Gastrocnemius medialis (tissue), 4 donors: ENCODE measurements at regions of chr5 and their contacts with region 1.

Region 1: DNA sequence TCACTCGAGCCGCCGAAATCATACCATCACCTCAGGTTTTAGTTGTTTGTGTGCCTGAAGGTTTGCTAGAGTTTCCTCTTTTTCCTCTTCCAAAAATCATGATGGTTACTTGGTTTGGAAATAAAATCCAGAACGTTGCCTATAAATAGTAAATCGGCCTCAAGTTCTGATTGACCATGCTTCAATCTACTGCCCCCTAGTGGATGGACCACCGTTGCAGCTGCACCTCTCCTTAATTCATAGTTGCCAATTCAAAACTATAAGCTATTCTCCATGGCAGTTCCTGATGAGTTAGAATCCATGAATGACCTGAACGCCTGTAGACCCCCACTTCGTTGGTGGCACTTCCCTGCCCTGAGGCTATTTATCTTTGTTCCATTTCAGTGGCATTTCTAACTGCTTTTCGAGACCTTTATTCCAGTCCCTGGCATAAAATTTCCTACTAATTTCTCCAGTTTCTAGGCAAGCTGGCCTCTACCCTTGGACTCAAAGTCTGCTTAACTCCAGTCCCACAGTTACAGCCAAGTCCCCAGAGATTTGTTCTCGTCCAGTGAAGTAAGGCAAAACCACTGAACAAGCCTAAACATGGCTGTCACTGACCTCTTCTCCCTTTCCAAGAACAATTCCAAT is 422.6 kb downstream of the EFNA5 start:
- DNase-seq: peak; percentile 15 to 64
- ATAC-seq: peak; percentile 65 to 89
- H3K4me3 ChIP-seq: peak overlapping the region in 1 of 4 donors; percentile 8
- H3K27ac ChIP-seq: peak overlapping the region in 1 of 4 donors; percentile 16
- H3K4me1 ChIP-seq: no peaks in the 10 kb centered on the region
- H3K27me3 ChIP-seq: no peaks in the 10 kb centered on the region
- CTCF ChIP-seq: peak; percentile 60 to 87 (median 77)
- POLR2A ChIP-seq: no peak

Region 2: DNA sequence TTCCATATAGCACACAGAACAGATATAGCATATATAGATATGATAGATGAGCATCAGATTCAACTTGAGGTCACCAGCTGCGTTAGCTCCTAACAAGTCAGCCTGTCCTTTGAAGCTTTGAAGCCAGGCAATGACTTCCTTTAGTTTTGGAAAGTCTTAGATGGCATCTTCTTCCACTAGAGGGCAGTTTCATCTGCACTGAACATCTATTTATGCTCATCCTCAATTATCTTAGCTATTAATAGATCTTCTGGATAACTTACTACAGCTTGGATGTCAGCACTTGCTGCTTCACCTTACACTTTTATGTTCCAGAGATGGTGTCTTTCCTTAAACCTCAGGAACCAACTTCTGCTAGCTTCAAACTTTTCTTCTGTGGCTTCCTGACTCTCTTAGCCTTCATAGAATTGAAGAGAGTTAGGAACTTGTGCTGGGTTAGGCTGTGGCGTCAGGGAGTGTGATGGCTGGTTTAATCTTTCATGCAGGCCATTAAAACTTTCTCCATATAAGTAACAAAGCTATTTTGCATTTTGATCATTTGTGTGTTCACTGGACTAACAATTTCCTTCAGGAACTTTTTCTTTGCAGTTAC is 978.8 kb before region 1 on chr5:
- in situ Hi-C with region 1: no loop called
- intact Hi-C with region 1: loop called (anchors 5 kb)
- DNase-seq: no peak
- ATAC-seq: peak in 1 of 2 donors; percentile 71
- H3K4me3 ChIP-seq: no peak overlapping the region
- H3K27ac ChIP-seq: no peak overlapping the region
- H3K4me1 ChIP-seq: peaks cover 0 to 4% of the 10 kb centered on the region in 2 donors
- H3K27me3 ChIP-seq: no peaks in the 10 kb centered on the region
- CTCF ChIP-seq: peak in 2 of 5 experiments; percentile 30 to 38
- POLR2A ChIP-seq: no peak

Region 3: DNA sequence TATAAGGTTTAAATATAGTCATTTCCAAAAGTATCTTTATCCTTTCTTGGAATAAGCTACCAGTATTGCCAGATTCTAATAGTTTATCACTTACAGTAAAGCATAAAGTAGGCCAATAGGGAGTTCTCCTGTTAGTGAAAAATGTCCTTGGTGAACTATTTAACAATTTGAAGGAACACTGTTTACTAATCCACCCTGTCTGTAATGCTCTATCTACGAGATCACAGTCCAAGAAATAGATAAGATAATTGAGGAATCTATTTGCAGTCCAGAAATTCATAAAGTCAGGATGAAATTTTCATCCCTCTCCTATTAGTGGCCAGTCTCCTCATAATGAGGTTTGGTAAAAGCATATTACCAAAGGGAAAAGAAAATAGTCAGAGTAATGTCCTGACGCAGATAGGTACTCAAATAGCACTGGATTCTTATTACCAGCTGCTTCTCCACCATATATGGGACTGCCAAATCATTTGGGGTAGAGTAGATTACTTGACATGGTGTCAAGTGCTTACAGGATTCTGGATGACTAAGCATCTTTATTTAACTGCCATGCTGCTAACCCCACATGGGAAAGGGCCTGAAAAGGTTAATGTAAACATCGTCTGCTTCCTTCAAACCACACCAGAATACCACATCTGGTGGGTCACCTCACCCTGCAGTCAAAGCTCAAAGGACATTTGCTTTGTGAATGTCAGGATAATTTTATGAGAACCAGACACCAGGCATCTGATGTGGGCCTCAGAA is 385.6 kb before region 1 on chr5:
- in situ Hi-C with region 1: no loop called
- intact Hi-C with region 1: no loop called
- DNase-seq: no peak
- ATAC-seq: peak in 1 of 2 donors; percentile 91
- H3K4me3 ChIP-seq: no peak overlapping the region
- H3K27ac ChIP-seq: peak overlapping the region in 3 of 4 donors; percentile 29 to 60 (median 42)
- H3K4me1 ChIP-seq: peaks cover 8 to 12% of the 10 kb centered on the region in 2 donors
- H3K27me3 ChIP-seq: no peaks in the 10 kb centered on the region
- CTCF ChIP-seq: no peak
- POLR2A ChIP-seq: no peak

Region 4: GRCh38 chr5:107104040-107104995 is 143.9 kb before region 1 on chr5:
- in situ Hi-C with region 1: loop called in 1 of 4 experiments (anchors 10 kb)
- intact Hi-C with region 1: loop called (anchors 1 kb)
- DNase-seq: peak; percentile 37 to 74
- ATAC-seq: peak; percentile 95 to 99
- H3K4me3 ChIP-seq: no peak overlapping the region
- H3K27ac ChIP-seq: peak overlapping the region; percentile 68 to 75 (median 71)
- H3K4me1 ChIP-seq: peaks cover 3 to 6% of the 10 kb centered on the region in 2 donors
- H3K27me3 ChIP-seq: no peaks in the 10 kb centered on the region
- CTCF ChIP-seq: peak; percentile 19 to 44 (median 24)
- POLR2A ChIP-seq: no peak

Region 5: GRCh38 chr5:107149243-107150005 is 98.8 kb before region 1 on chr5:
- in situ Hi-C with region 1: no loop called
- intact Hi-C with region 1: loop called (anchors 5 kb)
- DNase-seq: no peak
- ATAC-seq: no peak
- H3K4me3 ChIP-seq: no peak overlapping the region
- H3K27ac ChIP-seq: no peak overlapping the region
- H3K4me1 ChIP-seq: peaks cover 0 to 17% of the 10 kb centered on the region in 2 donors
- H3K27me3 ChIP-seq: no peaks in the 10 kb centered on the region
- CTCF ChIP-seq: no peak
- POLR2A ChIP-seq: no peak